Activated CD8-positive, alpha-beta T cell treated with anti-CD3 and anti-CD28 coated beads, Interleukin-2, amount 10 ng/mL, durations not matched to agents 7 days and 5 days (primary cell): ENCODE measurements at regions of chr9 and their contacts with region 1.

Region 1: GRCh38 chr9:133048569-133048968 is 13.2 kb upstream of the CEL start:
- DNase-seq: peak; percentile 54
- ATAC-seq: peak; percentile 84
- H3K4me3 Mint-ChIP-seq: no peak overlapping the region
- H3K27ac Mint-ChIP-seq: no peak overlapping the region
- H3K4me1 Mint-ChIP-seq: peaks cover 12% of the 10 kb centered on the region
- H3K27me3 Mint-ChIP-seq: no peaks in the 10 kb centered on the region

Region 2: GRCh38 chr9:133060417-133060841 is 11.9 kb after region 1 on chr9:
- CTCF ChIA-PET with region 1: interaction called, 11 read pairs
- POLR2A ChIA-PET with region 1: no interaction called
- DNase-seq: peak; percentile 48
- ATAC-seq: peak; percentile 34
- H3K4me3 Mint-ChIP-seq: peak overlapping the region; percentile 33
- H3K27ac Mint-ChIP-seq: peak overlapping the region; percentile 94
- H3K4me1 Mint-ChIP-seq: peaks cover 65% of the 10 kb centered on the region
- H3K27me3 Mint-ChIP-seq: no peaks in the 10 kb centered on the region

Region 3: GRCh38 chr9:133375119-133375723 is 326.7 kb after region 1 on chr9:
- CTCF ChIA-PET with region 1: no interaction called
- POLR2A ChIA-PET with region 1: no interaction called
- DNase-seq: peak; percentile 36
- ATAC-seq: no peak
- H3K4me3 Mint-ChIP-seq: peak overlapping the region; percentile 99
- H3K27ac Mint-ChIP-seq: peak overlapping the region; percentile 99
- H3K4me1 Mint-ChIP-seq: peaks cover 56% of the 10 kb centered on the region
- H3K27me3 Mint-ChIP-seq: peaks cover 3% of the 10 kb centered on the region